ENCODE measurements at regions of chr1 and their contacts with region 1.

Region 1: DNA sequence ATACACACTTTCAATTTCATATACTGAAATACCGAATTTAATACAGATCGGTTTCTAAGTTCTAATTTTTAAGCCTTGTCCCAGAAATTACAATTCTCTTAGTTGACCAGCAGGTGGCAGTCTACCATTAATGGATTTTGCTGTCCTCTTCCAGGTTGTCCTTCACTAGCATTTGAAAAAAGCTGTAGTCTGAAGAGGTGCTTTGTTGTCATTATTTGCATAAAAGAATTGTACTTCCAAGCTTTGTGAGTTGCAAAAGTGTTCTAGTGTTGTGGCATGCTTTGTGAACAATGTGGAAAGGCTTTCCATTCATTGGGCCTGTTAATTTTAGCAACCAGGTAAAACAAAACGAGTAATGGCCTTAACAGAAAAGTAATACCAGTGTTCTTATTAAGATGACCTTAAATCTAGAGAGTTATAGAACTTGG is 193.6 kb downstream of the RPS6KC1 start:
- DNase-seq: peak; percentile 71
- H3K4me3 Mint-ChIP-seq: no peak overlapping the region
- H3K27ac Mint-ChIP-seq: no peak overlapping the region
- H3K4me1 Mint-ChIP-seq: no peaks in the 10 kb centered on the region
- H3K27me3 Mint-ChIP-seq: no peaks in the 10 kb centered on the region

Region 2: DNA sequence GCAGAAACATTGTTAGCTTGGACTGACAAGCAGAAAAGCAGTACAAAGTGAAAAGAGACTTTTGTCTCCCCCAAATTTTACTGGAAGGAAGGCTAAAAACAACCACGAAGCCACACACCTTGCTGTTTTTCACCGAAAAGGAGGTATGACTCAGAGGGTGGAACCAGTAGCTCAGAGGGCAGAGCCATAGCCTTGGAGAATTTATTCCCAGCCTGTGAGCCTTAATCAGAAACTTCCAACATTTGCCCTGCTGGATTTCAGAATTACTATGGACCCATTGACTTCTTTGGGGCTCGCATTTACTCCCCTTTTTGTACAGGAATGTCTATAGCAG is 161.6 kb before region 1 on chr1:
- intact Hi-C with region 1: loop called (anchors 5 kb)
- DNase-seq: peak; percentile 81
- H3K4me3 Mint-ChIP-seq: peak overlapping the region; percentile 60
- H3K27ac Mint-ChIP-seq: no peak overlapping the region
- H3K4me1 Mint-ChIP-seq: peaks cover 32% of the 10 kb centered on the region
- H3K27me3 Mint-ChIP-seq: no peaks in the 10 kb centered on the region

Region 3: DNA sequence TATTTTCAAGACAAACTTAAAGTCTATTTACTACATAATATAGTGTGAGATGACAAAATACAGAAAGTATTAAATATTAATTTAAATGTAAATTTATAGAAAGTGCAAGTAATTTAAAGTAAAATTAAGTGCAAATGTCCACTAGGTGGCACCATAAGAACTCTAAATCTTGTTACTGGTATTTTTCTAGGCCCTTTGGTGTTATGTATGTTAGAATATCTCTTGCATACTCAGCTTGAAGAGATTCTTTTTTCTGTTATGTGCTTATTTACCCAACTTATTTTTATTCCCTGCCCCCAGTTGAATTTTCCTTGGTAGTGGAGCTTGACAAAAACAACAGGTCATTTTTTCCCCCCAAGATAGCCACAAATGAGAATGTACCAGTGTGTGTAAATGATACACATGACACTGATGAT is 122.2 kb before region 1 on chr1:
- intact Hi-C with region 1: loop called (anchors 5 kb)
- DNase-seq: no peak
- H3K4me3 Mint-ChIP-seq: no peak overlapping the region
- H3K27ac Mint-ChIP-seq: no peak overlapping the region
- H3K4me1 Mint-ChIP-seq: peaks cover 2% of the 10 kb centered on the region
- H3K27me3 Mint-ChIP-seq: no peaks in the 10 kb centered on the region

Region 4: DNA sequence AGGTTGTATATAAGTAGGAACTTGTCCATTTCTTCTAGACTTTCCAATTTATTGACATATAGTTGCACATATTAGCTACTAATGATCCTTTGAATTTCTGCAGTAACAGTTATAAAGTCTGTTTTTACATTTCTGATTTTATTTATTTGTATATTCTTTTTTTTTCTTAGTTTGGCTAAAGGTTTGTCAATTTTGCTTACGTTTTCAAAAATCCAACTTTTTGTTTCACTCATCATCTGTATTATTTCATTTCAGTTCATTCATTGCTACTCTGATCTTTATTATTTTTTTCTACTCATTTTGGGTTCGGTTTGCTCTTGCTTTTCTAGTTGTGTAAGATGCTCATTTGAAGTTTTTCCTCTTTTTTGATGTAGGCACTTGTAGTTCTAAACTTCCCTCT is 95.8 kb before region 1 on chr1:
- intact Hi-C with region 1: no loop called
- DNase-seq: no peak
- H3K4me3 Mint-ChIP-seq: no peak overlapping the region
- H3K27ac Mint-ChIP-seq: no peak overlapping the region
- H3K4me1 Mint-ChIP-seq: no peaks in the 10 kb centered on the region
- H3K27me3 Mint-ChIP-seq: no peaks in the 10 kb centered on the region

Region 5: GRCh38 chr1:213231795-213232231 is 12.9 kb before region 1 on chr1:
- intact Hi-C with region 1: no loop called
- DNase-seq: no peak
- H3K4me3 Mint-ChIP-seq: no peak overlapping the region
- H3K27ac Mint-ChIP-seq: no peak overlapping the region
- H3K4me1 Mint-ChIP-seq: peaks cover 4% of the 10 kb centered on the region
- H3K27me3 Mint-ChIP-seq: no peaks in the 10 kb centered on the region

Region 6: GRCh38 chr1:213374369-213374768 is 129.7 kb after region 1 on chr1:
- intact Hi-C with region 1: loop called (anchors 10 kb)
- DNase-seq: peak; percentile 85
- H3K4me3 Mint-ChIP-seq: no peak overlapping the region
- H3K27ac Mint-ChIP-seq: no peak overlapping the region
- H3K4me1 Mint-ChIP-seq: no peaks in the 10 kb centered on the region
- H3K27me3 Mint-ChIP-seq: peaks cover 7% of the 10 kb centered on the region

Measured in activated CD4-positive, alpha-beta T cell treated with anti-CD3 and anti-CD28 coated beads, Interleukin-2, amount 10 ng/mL, durations not matched to agents 24 days and 14 days (primary cell).